Psoas muscle (tissue), 8 donors: ENCODE measurements at regions of chr2 and their contacts with region 1.

Region 1: DNA sequence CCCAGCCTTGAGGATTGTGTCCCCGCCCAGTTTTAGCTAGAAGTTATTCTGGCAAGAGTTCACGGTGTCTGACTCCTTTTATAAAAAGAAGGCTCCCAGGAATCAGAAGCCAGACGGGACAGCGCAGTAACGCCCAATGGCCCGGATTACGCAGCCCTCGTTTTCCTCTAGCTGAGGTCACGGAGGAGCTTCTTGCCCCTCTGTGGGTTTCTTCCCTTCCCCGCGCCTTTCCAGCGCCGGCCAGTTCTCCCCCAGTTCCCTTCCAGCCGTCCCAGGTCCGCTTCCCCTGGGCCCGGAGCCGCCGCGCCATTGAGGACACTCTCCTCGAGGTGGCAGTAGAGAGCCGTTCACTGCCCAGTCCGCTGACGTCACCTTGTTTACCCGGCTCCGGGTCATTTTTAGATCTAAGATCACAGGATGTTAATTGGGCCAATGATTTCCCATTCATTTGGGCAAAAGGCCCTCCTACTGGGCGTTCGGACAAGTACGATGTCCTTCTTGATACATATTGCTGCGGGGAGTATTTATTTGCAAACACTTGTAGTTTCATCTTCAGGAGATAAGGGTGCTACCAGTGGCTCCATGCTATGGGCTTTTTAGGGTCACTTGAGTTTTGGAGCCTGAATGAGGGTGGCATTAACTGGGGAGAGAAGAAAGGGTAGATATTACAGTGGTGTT is 81.5 kb upstream of the PPM1B start:
- DNase-seq: peak; percentile 84 to 93
- ATAC-seq: peak; percentile 90 to 95 (median 93)
- H3K4me3 ChIP-seq: peak overlapping the region; percentile 57
- H3K27ac ChIP-seq: peak overlapping the region; percentile 90
- H3K4me1 ChIP-seq: peaks cover 43% of the 10 kb centered on the region
- H3K27me3 ChIP-seq: no peaks in the 10 kb centered on the region
- CTCF ChIP-seq: peak; percentile 97

Region 2: GRCh38 chr2:43461453-43462073 is 625.6 kb before region 1 on chr2:
- intact Hi-C with region 1: no loop called
- DNase-seq: no peak
- ATAC-seq: no peak
- H3K4me3 ChIP-seq: no peak overlapping the region
- H3K27ac ChIP-seq: no peak overlapping the region
- H3K4me1 ChIP-seq: peaks cover 42% of the 10 kb centered on the region
- H3K27me3 ChIP-seq: no peaks in the 10 kb centered on the region
- CTCF ChIP-seq: no peak

Region 3: DNA sequence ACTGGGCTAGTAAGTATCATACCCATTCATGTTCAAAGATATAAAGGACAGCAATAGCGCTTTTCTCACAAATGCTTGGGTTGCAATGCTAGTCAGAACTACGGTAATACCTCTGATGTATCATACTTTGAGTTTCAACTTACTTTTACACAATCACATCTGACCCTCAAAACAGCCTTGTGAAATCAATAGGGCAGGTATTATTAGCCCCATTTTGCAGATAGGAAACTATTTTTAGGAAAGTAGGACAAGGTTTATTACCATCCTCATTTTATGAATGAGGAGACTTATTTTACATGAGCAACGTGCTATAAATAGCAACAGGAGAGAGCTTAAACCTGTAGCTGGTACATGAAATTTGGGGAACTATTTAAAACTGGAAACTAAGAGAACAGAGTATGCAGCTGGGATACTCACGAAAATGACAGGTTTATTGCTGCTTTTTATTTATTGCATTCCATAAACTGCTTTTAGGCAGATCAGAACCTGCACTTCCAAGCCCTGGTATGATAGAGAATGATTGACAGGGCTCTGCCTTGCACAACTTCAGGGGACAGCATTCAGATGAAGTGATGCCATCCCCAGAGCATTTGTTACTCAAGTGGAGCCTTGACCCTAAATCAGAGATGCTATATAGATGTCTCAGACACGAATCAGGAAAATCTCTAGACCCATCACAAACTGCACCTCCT is 39.1 kb after region 1 on chr2:
- intact Hi-C with region 1: loop called in 1 of 2 experiments (anchors 2 kb)
- DNase-seq: peak in 1 of 2 donors; percentile 21
- ATAC-seq: peak; percentile 84 to 90 (median 88)
- H3K4me3 ChIP-seq: no peak overlapping the region
- H3K27ac ChIP-seq: peak overlapping the region; percentile 84
- H3K4me1 ChIP-seq: peaks cover 28% of the 10 kb centered on the region
- H3K27me3 ChIP-seq: no peaks in the 10 kb centered on the region
- CTCF ChIP-seq: no peak

Region 4: GRCh38 chr2:44167940-44168680 is 80.9 kb after region 1 on chr2:
- intact Hi-C with region 1: loop called (anchors 2 to 10 kb)
- DNase-seq: peak; percentile 97 to 99
- ATAC-seq: peak; percentile 81 to 89 (median 84)
- H3K4me3 ChIP-seq: peak overlapping the region; percentile 71
- H3K27ac ChIP-seq: peak overlapping the region; percentile 96
- H3K4me1 ChIP-seq: peaks cover 14% of the 10 kb centered on the region
- H3K27me3 ChIP-seq: no peaks in the 10 kb centered on the region
- CTCF ChIP-seq: no peak

Region 5: DNA sequence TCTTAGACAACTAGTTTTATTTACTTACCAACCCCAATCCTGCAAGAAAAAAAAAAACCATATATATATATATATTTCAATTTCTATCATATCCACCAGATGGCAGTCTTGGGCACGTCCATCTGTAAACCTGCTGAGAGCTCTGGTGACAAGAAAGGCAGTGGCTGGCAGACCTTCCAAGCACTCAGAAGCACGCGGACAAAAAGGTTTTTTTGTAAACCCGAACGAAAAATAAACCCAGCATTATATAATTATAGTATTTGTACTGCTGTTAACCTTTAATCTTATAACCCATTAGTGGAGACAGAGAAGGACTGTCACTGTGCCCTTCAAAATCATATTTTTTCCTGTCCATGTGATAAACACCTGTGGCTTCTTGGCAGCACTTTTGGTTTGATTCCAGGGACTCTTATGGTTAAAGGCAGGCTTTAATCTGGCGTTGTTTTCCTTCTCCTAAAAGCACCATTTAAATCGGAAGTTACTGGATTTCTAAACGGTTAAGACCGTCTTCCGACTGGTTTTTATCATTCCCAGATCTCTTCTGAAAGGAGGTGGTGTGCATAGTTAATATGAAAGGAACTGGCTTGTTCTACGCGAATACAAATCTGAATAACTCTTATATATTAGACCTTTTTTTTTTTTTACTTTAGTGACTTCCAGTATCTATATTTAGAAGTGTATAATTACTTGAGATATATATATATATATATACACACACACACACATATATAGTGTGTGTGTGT is 157.1 kb after region 1 on chr2:
- intact Hi-C with region 1: loop called in 1 of 2 experiments (anchors 5 kb)
- DNase-seq: peak; percentile 35 to 63
- ATAC-seq: peak; percentile 71 to 89 (median 86)
- H3K4me3 ChIP-seq: peak overlapping the region; percentile 61
- H3K27ac ChIP-seq: peak overlapping the region; percentile 50
- H3K4me1 ChIP-seq: peaks cover 12% of the 10 kb centered on the region
- H3K27me3 ChIP-seq: no peaks in the 10 kb centered on the region
- CTCF ChIP-seq: peak; percentile 68

Region 6: DNA sequence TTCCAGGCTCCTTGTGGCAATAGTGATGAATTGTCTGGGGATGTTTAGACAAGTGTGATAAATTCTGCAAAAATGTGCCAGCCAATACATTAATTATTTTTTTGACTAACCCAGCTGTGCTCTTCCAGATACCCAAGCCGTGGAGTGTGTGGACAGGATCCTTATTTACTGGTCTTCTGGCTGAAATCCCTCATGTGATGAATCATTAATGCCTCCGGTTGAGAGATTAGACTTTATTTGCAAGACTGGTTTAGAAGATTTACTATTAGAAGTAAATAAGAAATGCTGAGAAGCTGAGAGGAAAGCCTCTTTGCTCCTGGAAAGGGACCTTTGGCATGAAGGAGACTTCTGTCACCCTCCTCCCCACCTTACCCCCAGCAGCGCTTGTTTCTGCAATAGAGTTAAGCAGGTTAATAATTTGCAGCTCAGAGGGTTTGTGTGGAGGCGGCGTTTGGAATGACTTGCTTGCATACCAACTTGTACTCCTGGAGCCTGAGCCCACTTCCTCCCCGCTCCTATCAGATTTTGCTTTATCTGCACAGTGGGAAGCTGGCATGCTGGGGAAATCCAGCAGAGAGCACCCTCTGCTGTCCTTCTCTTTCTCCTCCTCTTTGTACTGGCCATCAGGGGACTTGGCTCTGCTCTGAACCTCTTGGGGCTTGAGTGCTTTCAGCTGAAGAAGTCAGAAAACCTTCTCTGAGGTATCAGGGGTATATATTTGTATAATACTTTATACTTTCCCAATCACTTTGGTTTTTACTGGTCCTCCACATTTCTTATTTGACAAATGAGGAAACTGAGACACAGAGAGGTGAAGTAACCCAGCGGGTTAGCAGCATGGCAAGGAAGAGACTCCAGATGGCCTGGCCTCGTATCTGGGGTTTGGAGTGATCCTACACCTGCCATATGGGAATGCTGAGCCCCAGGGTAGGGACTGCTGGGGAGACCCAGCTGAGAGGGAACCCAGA is 204.4 kb after region 1 on chr2:
- intact Hi-C with region 1: loop called in 1 of 2 experiments (anchors 5 kb)
- DNase-seq: peak; percentile 18 to 52
- ATAC-seq: peak; percentile 89 to 97 (median 92)
- H3K4me3 ChIP-seq: peak overlapping the region; percentile 46
- H3K27ac ChIP-seq: no peak overlapping the region
- H3K4me1 ChIP-seq: peaks cover 9% of the 10 kb centered on the region
- H3K27me3 ChIP-seq: no peaks in the 10 kb centered on the region
- CTCF ChIP-seq: peak; percentile 65